AG04449 (cell line): ENCODE measurements at regions of chr10 and their contacts with region 1.

Region 1: GRCh38 chr10:17228091-17228940 is at the start of gene VIM:
- DNase-seq: no peak
- H3K4me3 ChIP-seq: peak within 1 kb of the TSS; percentile 95
- CTCF ChIP-seq: peak; percentile 24

Region 2: DNA sequence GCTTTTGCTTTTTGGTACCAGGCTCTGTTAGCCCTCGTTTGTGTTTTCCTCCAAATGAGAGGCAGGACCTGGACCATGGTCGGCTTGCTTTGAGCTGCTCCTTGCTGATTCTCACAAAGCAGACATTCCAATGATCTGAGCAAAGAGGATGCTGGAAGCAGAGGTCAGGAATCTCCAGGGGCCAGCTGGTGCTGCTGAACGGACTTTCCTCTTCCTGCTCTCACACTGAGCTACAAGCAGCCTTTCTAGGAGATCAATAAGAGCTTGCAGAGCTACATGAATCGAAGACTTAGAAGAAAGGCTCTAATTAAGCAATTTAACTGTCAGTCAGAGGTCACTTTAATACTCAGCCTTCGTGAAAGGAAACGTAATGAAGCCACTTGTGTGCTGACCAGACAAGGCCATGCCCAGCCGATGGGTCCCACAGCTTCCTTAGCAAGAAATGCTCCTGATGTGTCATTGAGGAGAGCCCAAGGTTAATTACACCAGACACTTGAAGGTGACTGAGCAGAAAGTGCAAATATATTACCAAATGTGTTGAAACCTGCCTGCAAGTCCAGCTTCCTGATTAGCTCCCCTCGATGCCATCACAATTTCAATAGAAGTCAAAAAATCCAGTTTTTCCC is 259.8 kb before region 1 on chr10:
- CTCF ChIA-PET with region 1: no interaction called
- POLR2A ChIA-PET with region 1: interaction called, 10 read pairs
- DNase-seq: no peak
- H3K4me3 ChIP-seq: no peak overlapping the region
- CTCF ChIP-seq: no peak

Region 3: GRCh38 chr10:17001961-17002749 is 226.2 kb before region 1 on chr10:
- CTCF ChIA-PET with region 1: no interaction called
- POLR2A ChIA-PET with region 1: interaction called, 16 read pairs
- DNase-seq: peak; percentile 92
- H3K4me3 ChIP-seq: no peak overlapping the region
- CTCF ChIP-seq: no peak

Region 4: DNA sequence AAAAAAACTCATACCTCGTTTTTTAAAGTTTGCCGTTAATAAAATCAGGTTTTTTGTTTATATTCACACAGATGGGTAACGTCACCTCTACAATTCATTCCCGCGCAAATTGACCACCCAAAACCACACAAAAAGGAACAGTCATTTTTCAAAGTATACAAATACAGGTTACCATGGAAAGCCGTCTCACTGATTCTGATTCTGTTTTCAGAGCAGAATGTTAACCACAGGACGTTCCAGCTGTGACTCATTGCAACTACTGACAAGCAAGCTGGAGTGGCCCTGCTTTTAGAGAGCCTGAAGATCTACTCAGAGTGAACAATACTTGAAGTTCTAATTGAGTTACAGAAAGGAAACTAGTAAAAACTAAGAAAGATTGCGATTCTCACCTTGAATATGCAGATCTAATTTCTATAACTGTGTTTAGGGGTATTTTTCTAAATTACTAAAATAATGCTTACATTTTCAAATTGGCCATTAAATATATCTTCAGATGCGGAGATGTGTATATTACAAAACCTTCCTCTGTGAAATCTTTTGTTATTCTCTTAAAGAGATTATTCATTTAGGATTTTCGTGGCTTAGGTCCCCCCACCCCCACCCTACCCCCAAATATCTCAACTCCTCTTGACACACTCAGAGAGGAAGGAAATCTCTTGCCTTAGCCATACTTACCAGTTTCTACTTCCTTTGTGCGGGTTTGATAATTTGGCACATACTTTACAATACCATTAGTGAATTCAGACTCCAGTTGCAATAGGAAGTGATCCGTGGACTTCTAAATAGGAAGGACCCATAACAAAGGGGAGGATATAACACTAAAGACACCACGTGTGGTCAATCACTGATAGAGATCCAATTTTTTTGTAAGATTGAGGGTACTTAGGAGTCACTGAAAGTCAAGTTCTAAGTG is 204.7 kb before region 1 on chr10:
- CTCF ChIA-PET with region 1: interaction called, 4 read pairs
- POLR2A ChIA-PET with region 1: interaction called, 12 read pairs
- DNase-seq: peak; percentile 95
- H3K4me3 ChIP-seq: no peak overlapping the region
- CTCF ChIP-seq: no peak

Region 5: GRCh38 chr10:17075533-17076359 is 152.6 kb before region 1 on chr10:
- CTCF ChIA-PET with region 1: no interaction called
- POLR2A ChIA-PET with region 1: interaction called, 13 read pairs
- DNase-seq: peak; percentile 83
- H3K4me3 ChIP-seq: no peak overlapping the region
- CTCF ChIP-seq: no peak

Region 6: DNA sequence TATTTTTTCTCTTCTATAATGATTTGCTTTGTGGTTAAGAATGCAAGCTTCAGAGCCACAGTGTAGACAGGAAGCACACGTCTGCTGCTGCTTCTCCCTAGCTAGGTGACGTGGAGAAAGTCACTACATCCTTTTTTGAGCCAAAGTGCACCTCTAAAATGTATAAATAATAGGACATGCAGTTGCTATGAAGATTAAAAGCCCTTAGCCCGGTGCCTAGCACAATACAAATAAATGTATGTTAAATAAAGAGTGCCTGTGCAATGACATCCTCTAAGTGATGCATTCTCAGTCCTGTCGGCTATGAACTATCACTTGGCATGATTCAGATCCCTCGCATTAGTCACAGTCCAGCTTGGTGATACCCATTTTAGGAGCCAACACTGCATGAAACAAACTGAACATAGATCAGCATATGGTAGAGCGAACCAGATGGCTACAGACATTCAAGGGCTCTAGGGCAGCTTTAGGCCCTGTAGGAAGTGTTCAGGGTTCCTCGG is 22.1 kb before region 1 on chr10:
- CTCF ChIA-PET with region 1: interaction called, 4 read pairs
- POLR2A ChIA-PET with region 1: interaction called, 54 read pairs
- DNase-seq: no peak
- H3K4me3 ChIP-seq: no peak overlapping the region
- CTCF ChIP-seq: no peak

Region 7: DNA sequence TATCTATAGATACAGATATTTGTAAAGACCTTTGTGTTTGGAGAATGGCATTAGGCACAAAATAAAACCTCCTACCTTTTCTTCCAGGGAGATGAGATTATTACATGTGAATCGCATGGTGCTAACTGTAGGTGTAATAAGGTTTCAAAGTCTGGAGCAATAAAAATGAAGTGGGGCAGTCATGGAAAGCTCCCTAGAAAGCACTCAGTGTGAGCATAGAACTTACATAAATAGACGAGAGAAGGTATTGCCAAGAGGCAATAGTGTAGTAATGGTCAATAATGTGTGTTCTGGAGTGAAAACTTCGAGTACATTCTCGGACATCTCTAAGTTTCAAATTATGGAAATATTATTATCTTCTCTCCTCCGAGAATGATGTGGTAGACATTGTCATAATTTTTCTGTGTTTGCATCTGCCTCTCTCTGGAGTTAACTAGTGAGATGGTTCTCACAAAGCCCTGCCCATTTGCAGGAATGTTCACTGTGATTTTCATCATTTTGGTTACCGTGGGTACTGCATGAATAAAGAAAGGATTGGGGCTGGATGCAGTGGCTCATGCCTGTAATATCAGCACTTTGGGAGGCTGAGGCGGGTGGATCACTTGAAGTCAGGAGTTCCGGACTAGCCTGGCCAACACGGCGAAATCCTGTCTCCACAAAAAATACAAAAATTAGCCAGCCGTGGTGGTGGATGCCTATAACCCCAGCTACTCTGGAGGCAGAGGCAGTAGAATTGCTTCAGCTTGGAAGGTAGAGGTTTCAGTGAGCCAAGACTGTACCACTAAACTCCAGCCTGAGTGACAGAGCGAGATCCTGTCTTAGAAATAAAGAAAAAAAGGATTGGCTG is 10.4 kb after region 1 on chr10:
- CTCF ChIA-PET with region 1: interaction called, 4 read pairs
- POLR2A ChIA-PET with region 1: interaction called, 25 read pairs
- DNase-seq: no peak
- H3K4me3 ChIP-seq: no peak overlapping the region
- CTCF ChIP-seq: no peak

Region 8: DNA sequence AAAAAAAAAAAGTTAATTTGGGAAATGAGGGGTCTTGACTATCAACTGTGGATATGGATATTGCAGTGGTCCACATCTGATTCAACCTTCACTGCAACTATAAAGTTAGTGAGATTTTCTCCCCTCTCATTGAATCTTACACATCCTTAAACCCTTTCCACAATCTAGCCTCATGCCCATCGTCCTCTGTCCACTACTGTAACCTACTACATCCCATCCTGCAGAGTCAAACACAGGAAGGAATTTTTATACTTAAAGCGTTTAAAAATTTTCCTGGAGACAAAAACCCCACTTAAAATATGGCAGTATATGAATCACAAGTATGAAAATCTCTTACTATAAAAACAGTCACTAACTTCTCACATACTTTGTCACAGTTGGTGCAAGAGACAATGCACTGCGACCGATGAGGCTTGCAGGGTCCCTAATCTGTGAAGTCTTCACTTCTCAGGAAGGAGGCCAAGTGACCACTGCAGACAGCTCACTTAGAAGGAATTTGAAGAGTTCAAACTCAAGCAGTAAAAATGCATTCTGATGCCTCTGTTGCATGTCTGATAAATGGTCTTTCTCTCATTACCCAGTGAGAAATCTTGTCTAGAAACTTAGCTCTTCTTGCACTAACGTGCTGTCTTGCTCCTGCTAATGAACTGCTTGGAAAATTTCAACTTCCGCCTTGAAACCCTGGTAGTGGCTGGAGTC is 276.4 kb after region 1 on chr10:
- CTCF ChIA-PET with region 1: no interaction called
- POLR2A ChIA-PET with region 1: no interaction called
- DNase-seq: peak; percentile 67
- H3K4me3 ChIP-seq: no peak overlapping the region
- CTCF ChIP-seq: no peak